ENCODE measurements at regions of chr17 and their contacts with region 1.

Region 1: DNA sequence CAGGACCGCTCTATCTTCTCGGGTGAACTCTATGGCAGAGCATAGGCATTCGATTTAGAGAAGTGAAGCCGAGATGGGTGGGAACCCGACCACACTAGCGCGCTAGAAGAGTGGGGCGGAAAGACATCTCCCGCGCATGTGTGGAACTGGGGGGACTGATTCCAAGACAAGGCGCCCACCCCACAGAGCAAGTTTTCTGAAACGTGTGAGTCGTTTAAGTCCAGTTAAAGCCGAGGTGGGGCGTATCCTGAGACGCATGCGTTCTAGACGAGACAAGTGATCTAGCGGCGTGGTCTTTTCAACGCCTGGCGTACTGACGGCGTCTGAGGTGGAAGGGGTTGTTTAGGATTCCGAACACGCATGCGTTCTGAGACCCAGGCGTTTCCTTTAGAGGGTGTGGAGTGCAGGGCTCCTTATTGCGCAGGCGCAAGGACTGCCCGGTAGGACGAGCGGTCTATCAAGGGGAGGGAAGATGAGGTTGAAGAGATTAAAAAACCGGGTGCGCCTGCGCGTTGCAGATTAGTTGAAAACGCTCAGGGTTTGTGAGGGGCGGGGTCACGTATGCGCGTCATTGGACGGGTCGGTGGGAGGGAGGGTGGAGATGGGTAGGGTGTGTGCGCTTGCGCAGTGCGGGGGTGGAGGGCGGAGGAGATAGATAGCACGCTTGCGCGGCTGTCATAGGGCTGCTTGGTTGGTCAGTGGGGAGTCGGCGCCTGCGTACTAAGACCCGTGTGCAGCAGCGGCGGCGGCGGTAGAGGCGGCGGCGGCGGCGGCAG is at the start of gene EIF5A:
- DNase-seq: peak; percentile 100
- H3K4me3 ChIP-seq: peak within 1 kb of the TSS; percentile 99
- H3K27ac ChIP-seq: peak within 1 kb of the TSS; percentile 95
- H3K4me1 ChIP-seq: peaks cover 38% of the 10 kb centered on the region
- CTCF ChIP-seq: no peak
- total RNA-seq, gene EIF5A: 491 and 519 TPM in 2 replicates

Region 2: DNA sequence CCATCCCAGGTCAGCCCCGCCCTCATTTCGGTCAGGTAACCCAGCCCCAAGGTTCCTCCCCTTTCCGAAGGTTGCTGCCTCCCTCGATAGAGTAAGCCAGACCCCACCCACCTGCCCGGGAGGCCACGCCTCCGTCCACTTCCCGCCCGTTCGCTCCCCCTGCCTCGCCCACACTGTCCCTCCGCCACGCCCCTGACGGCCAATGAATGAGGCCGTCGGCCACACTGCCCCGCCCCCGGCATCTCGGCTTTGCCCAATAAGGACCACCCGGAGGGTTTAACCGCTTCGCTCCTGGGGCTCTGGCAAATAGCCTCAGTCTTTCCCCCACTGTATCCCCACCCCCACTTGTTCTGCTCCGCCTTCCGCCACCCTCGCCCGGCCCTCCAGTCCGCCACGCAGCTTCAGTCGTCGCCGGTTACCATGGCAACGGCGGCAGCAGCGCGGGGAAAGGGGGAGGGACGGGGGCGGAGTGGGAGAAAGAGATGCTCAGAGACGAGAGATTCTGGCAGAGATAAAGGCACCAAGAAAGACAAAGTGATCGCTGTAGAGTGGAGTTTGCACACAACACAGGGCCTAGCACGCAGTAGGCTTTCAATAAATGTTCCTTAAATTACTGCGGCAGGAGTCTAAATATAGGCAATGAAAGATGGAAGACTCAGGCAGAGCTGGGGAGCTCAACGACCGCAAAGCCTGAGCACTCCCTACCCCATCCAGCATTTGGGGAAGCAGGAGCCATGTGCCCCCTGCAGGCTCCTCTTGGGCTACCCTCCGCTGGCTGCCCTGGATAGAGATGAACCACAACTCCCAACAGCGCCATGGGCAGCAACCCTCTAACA is 92.6 kb before region 1 on chr17:
- CTCF ChIA-PET with region 1: interaction called, 3 read pairs
- POLR2A ChIA-PET with region 1: no interaction called
- intact Hi-C with region 1: loop called (anchors 1 kb)
- DNase-seq: peak; percentile 99
- H3K4me3 ChIP-seq: peak overlapping the region; percentile 75
- H3K27ac ChIP-seq: peak overlapping the region; percentile 65
- H3K4me1 ChIP-seq: peaks cover 52% of the 10 kb centered on the region
- CTCF ChIP-seq: peak; percentile 74

Region 3: GRCh38 chr17:7239091-7240027 is 67.7 kb before region 1 on chr17 and contains the start of gene PHF23:
- CTCF ChIA-PET with region 1: no interaction called
- POLR2A ChIA-PET with region 1: no interaction called
- intact Hi-C with region 1: no loop called
- DNase-seq: peak; percentile 99
- H3K4me3 ChIP-seq: peak within 1 kb of the TSS; percentile 100
- H3K27ac ChIP-seq: peak within 1 kb of the TSS; percentile 86
- H3K4me1 ChIP-seq: peaks cover 60% of the 10 kb centered on the region
- CTCF ChIP-seq: 0 out of 2 replicates have a peak, but pooled peaks have one; percentile 9
- total RNA-seq, gene PHF23: 47.7 and 50.8 TPM in 2 replicates

Region 4: DNA sequence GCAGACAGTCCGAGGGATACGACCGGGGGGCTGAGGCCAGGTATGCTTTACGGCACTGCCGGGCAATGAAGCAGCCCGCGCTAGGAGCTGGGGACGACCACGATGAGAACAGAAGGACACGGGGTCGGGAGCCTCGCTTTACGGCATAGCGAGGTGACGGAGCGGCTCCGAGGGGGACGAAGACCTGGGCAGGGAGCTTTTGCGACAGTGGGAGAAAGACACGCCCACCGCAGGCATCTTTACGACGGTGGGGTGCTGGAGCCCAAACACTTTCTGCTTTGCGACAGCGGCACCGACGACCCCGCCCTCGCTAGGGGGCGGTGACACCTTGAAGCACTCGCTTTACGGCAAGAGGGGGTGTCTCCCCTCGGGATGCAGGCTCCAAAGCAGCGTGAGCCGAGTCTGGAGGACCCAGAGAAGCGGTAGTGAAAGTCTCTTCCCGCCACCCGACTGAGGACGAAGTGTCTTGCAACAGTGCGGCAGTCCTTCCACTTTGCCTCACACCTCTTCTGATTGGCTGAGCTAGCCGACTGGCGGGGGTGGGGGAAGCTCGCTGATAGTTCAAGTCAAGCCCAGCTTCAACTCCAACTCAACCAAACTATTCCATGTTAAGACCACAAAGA is 22.4 kb after region 1 on chr17:
- CTCF ChIA-PET with region 1: no interaction called
- POLR2A ChIA-PET with region 1: interaction called, 12 read pairs
- intact Hi-C with region 1: loop called (anchors 2 kb)
- DNase-seq: peak; percentile 100
- H3K4me3 ChIP-seq: peak overlapping the region; percentile 82
- H3K27ac ChIP-seq: peak overlapping the region; percentile 96
- H3K4me1 ChIP-seq: peaks cover 42% of the 10 kb centered on the region
- CTCF ChIP-seq: no peak

Measured in OCI-LY7 (cell line).